Stomach (tissue), 19 donors: ENCODE measurements at regions of chr9 and their contacts with region 1.

Region 1: GRCh38 chr9:21812946-21813568 is 10.6 kb downstream of the MTAP start:
- DNase-seq: peak; percentile 81 to 82
- H3K4me3 ChIP-seq: no peak overlapping the region
- H3K27ac ChIP-seq: peak overlapping the region in 2 of 5 donors; percentile 13 to 20
- H3K4me1 ChIP-seq: peaks cover 0 to 30% (median 13%) of the 10 kb centered on the region in 4 donors
- H3K27me3 ChIP-seq: no peaks in the 10 kb centered on the region
- CTCF ChIP-seq: peak in 5 of 7 experiments; percentile 74 to 93 (median 90)
- EP300 ChIP-seq: no peak
- POLR2A ChIP-seq: no peak

Region 2: GRCh38 chr9:21750021-21750735 is 62.9 kb before region 1 on chr9:
- intact Hi-C with region 1: no loop called
- DNase-seq: no peak
- H3K4me3 ChIP-seq: no peak overlapping the region
- H3K27ac ChIP-seq: no peak overlapping the region
- H3K4me1 ChIP-seq: no peaks in the 10 kb centered on the region
- H3K27me3 ChIP-seq: no peaks in the 10 kb centered on the region
- CTCF ChIP-seq: no peak
- EP300 ChIP-seq: no peak
- POLR2A ChIP-seq: no peak

Region 3: DNA sequence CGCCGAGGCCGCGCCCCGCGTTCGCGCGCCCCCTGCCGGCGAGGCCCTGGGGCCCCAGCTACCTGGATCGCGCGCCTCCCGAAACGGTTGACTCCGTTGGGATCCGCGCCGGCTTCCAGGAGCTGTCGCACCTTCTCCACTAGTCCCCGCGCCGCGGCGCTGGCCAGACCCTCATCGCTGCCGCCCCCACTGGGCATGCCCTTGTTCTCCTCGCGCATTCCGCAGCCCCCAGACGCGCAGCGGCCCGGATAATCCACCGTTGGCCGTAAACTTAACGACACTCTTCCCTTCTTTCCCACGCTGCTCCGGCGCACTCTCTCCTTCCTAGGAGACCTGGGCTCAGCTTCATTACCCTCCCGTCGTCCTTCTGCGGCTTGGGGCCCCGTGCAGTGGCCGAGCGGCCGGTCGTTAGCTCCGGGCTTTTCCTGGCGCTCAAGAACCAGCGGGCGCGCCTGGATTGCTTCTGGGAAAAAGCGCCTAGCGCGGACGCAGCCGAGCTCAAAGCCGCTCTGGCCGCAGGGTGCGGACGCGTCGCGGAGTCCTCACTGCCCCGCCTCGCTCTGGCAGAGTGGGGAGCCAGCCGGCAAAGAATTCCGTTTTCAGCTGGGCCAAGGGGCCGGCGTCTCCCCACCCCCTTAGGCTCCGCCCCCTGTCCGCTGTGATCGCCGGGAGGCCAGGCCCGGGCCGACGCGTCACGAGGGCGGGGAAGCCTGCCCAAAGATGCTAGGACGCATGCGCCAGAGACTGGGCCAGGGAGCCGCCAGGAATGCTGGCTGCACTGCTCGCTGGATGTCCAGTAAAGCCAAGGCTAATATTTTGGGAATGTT is 195.9 kb after region 1 on chr9 and contains the start of gene CDKN2B:
- intact Hi-C with region 1: loop called (anchors 10 kb)
- DNase-seq: peak; percentile 96 to 97
- H3K4me3 ChIP-seq: peak within 1 kb of the TSS; percentile 51 to 85 (median 75)
- H3K27ac ChIP-seq: peak within 1 kb of the TSS; percentile 78 to 92 (median 88)
- H3K4me1 ChIP-seq: peaks cover 10 to 33% (median 25%) of the 10 kb centered on the region in 4 donors
- H3K27me3 ChIP-seq: peaks cover 12 to 75% (median 19%) of the 10 kb centered on the region in 3 donors
- CTCF ChIP-seq: peak in 5 of 7 experiments; percentile 68 to 94 (median 80)
- EP300 ChIP-seq: no peak
- POLR2A ChIP-seq: peak in 1 of 4 donors; percentile 29
- total RNA-seq, gene CDKN2B: 0.58 to 152 (median 3.6) TPM in 4 of 5 donors, not detected in the other

Region 4: DNA sequence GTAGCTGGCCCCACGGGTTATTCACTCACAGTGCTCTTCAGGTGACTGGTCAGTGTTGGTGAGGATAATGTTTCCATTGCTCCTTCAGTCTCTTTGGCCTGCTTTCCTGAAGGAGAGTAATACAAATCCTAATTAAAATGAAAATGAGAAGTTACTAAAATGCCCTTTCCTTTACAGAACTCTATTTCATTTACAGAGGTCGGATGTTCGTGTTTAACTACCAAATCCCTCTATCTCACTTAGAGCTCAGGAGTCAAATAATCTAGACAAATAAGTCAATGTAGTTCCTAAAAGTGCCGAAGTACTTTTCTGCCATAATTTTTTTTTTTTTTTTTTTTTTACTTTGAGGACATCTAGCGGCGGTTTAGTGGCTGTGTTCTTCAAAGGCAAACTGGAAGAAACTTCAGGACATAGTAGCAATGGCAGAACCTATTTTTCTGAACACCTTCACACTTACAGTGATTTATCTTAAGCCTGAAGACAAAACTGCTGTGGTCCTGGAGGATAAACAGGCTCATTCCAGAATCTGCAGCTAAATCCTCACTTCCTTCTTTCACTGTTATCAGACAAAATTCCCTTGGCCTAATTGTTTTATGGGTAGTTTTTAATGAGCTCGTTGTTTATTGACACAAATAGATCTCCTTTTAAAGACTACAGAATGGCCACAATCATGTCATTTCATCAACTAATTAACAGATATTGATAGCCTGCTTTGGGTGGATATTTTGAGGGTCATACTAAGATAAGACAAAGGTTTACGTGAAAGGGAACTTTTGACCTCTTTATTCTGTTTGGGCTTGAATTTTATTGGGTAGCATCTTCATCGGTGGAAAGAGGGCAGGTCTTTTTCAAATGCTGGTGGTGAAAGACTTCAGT is 426.0 kb after region 1 on chr9:
- intact Hi-C with region 1: loop called (anchors 5 kb)
- DNase-seq: peak in 1 of 2 donors; percentile 52
- H3K4me3 ChIP-seq: no peak overlapping the region
- H3K27ac ChIP-seq: no peak overlapping the region
- H3K4me1 ChIP-seq: peaks cover 0 to 11% (median 0%) of the 10 kb centered on the region in 4 donors
- H3K27me3 ChIP-seq: no peaks in the 10 kb centered on the region
- CTCF ChIP-seq: peak in 4 of 7 experiments; percentile 21 to 34 (median 29)
- EP300 ChIP-seq: no peak
- POLR2A ChIP-seq: no peak